Activated CD4-positive, alpha-beta T cell treated with anti-CD3 and anti-CD28 coated beads for 36 hours (primary cell): ENCODE measurements at regions of chr2 and their contacts with region 1.

Region 1: GRCh38 chr2:96145036-96145847 is at the start of gene DUSP2:
- DNase-seq: peak; percentile 97
- ATAC-seq: peak; percentile 45
- H3K4me3 Mint-ChIP-seq: peak within 1 kb of the TSS; percentile 97
- H3K27ac Mint-ChIP-seq: peak within 1 kb of the TSS; percentile 99
- H3K4me1 Mint-ChIP-seq: peaks cover 57% of the 10 kb centered on the region
- H3K27me3 Mint-ChIP-seq: no peaks in the 10 kb centered on the region
- total RNA-seq, gene DUSP2: 248 to 407 TPM

Region 2: DNA sequence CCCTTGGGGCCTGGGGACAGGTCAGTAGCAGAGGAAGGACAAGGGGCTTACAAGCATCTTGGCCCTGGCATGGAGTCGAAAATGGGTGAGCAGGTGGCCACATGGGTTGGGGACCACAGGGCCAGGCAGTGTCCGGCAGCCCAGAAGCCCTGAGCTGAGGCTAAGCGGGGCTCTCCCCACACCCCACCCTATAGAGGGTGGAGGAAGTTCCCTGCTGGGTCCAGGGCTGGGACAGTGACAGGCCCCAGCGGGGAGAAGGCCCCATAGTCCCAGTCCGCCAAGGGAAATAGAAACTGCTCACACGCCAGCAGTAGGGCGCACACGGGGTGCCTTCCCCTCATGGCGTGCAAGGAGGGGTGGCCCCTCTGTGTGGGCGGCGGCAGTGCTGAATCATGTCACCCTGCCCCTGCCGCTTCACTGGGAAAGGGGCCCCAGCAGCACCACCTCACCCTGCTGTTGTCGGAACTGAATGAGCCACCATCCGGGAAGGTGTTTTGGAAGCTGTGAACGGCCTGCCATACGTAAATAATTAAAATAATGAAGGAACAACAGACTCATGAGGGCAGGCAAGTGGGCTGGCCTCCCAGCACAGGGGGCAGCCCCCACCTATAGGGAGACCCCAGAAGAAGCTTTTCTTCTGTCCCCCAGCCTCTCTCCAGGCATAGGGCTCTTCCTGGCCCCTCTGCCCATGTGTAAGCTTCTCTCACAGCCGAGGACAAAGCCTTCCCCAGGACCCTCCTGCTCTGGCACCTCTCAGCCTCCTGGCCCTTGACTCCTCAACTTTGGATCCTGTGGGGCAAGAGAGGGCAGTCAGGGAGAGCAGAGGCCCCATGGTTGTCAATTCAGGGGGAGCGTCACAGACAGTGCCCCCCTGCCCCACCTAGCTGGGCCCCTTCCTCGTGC is 12.7 kb after region 1 on chr2:
- CTCF ChIA-PET with region 1: interaction called, 18 read pairs
- POLR2A ChIA-PET with region 1: interaction called, 119 read pairs
- intact Hi-C with region 1: loop called (anchors 1 kb)
- DNase-seq: peak; percentile 99
- ATAC-seq: peak; percentile 79
- H3K4me3 Mint-ChIP-seq: peak overlapping the region; percentile 61
- H3K27ac Mint-ChIP-seq: peak overlapping the region; percentile 98
- H3K4me1 Mint-ChIP-seq: peaks cover 90% of the 10 kb centered on the region
- H3K27me3 Mint-ChIP-seq: no peaks in the 10 kb centered on the region

Region 3: GRCh38 chr2:96174251-96175144 is 29.3 kb after region 1 on chr2:
- CTCF ChIA-PET with region 1: interaction called, 347 read pairs
- POLR2A ChIA-PET with region 1: interaction called, 136 read pairs
- intact Hi-C with region 1: loop called (anchors 1 kb)
- DNase-seq: peak; percentile 92
- ATAC-seq: peak; percentile 96
- H3K4me3 Mint-ChIP-seq: peak overlapping the region; percentile 60
- H3K27ac Mint-ChIP-seq: peak overlapping the region; percentile 88
- H3K4me1 Mint-ChIP-seq: peaks cover 22% of the 10 kb centered on the region
- H3K27me3 Mint-ChIP-seq: no peaks in the 10 kb centered on the region

Region 4: GRCh38 chr2:96320728-96321622 is 175.7 kb after region 1 on chr2:
- CTCF ChIA-PET with region 1: no interaction called
- POLR2A ChIA-PET with region 1: no interaction called
- intact Hi-C with region 1: loop called (anchors 5 kb)
- DNase-seq: peak; percentile 54
- ATAC-seq: peak; percentile 10
- H3K4me3 Mint-ChIP-seq: peak overlapping the region; percentile 73
- H3K27ac Mint-ChIP-seq: peak overlapping the region; percentile 63
- H3K4me1 Mint-ChIP-seq: peaks cover 52% of the 10 kb centered on the region
- H3K27me3 Mint-ChIP-seq: peaks cover 10% of the 10 kb centered on the region

Region 5: GRCh38 chr2:96527286-96528005 is 382.2 kb after region 1 on chr2:
- CTCF ChIA-PET with region 1: no interaction called
- POLR2A ChIA-PET with region 1: interaction called, 3 read pairs
- intact Hi-C with region 1: loop called in 1 of 2 experiments (anchors 1 kb)
- DNase-seq: peak; percentile 87
- ATAC-seq: no peak
- H3K4me3 Mint-ChIP-seq: peak overlapping the region; percentile 76
- H3K27ac Mint-ChIP-seq: peak overlapping the region; percentile 98
- H3K4me1 Mint-ChIP-seq: peaks cover 88% of the 10 kb centered on the region
- H3K27me3 Mint-ChIP-seq: peaks cover 2% of the 10 kb centered on the region

Region 6: DNA sequence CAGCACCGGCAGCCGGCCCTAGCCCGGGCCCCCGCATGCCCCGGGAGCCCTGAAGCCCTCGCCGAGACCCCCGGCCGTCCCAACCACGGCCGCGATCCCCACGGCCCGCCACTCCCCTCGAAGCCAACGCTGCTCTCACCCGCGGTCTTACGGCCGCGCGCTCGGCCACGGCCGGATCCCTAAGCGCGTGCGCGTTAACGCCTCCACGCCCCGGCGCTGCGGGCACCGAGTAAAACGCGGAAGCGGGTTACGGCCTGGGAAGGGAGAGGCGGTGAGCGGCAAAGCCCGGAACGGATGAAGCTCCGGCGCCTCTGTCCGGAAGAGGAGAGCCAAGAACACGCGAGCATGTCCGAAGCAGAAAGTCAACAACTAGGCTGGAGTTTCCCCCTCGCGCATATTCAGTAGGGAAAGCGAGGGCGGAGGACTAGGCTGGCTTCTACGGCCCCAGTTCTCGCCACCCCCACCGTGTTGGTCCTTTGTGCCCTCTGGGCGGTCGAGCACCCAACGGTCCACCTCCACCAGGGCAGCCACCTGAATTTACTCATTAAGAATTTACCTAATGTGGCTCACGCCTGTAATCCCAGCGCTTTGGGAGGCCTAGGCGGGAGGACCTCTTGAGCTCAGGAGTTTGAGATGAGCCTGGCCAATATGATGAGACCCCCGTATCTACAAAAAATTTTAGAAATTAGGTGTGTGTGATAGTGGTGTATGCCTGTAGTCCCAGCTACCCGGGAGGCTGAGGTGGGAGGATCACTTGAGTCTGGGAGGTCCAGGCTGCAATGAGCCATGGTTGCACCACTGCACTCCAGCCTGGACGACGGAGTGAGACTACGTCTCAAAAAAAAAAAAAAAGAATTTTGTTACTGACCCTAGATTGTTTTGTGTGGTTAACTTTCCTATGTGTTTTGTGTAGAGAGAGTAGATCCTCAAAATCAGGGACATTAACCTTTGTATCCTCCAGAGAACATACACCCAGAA is 493.2 kb after region 1 on chr2 and contains the start of gene KANSL3:
- CTCF ChIA-PET with region 1: no interaction called
- POLR2A ChIA-PET with region 1: interaction called, 4 read pairs
- intact Hi-C with region 1: loop called in 1 of 2 experiments (anchors 1 kb)
- DNase-seq: peak; percentile 94
- ATAC-seq: peak; percentile 86
- H3K4me3 Mint-ChIP-seq: peak within 1 kb of the TSS; percentile 91
- H3K27ac Mint-ChIP-seq: peak within 1 kb of the TSS; percentile 93
- H3K4me1 Mint-ChIP-seq: peaks cover 30% of the 10 kb centered on the region
- H3K27me3 Mint-ChIP-seq: no peaks in the 10 kb centered on the region
- total RNA-seq, gene KANSL3: 33.9 to 39.1 TPM